Panc1 (cell line): ENCODE measurements at regions of chr12 and their contacts with region 1.

Region 1: GRCh38 chr12:120437754-120438494 is at the start of gene COX6A1:
- DNase-seq: peak; percentile 95
- ATAC-seq: peak; percentile 98
- H3K4me3 ChIP-seq: peak within 1 kb of the TSS; percentile 80 to 84
- H3K27ac ChIP-seq: peak within 1 kb of the TSS; percentile 86
- H3K4me1 ChIP-seq: peaks cover 9% of the 10 kb centered on the region
- H3K27me3 ChIP-seq: no peaks in the 10 kb centered on the region
- CTCF ChIP-seq: 0 out of 2 replicates have a peak, but pooled peaks have one; percentile 20
- total RNA-seq, gene COX6A1: 557 TPM

Region 2: DNA sequence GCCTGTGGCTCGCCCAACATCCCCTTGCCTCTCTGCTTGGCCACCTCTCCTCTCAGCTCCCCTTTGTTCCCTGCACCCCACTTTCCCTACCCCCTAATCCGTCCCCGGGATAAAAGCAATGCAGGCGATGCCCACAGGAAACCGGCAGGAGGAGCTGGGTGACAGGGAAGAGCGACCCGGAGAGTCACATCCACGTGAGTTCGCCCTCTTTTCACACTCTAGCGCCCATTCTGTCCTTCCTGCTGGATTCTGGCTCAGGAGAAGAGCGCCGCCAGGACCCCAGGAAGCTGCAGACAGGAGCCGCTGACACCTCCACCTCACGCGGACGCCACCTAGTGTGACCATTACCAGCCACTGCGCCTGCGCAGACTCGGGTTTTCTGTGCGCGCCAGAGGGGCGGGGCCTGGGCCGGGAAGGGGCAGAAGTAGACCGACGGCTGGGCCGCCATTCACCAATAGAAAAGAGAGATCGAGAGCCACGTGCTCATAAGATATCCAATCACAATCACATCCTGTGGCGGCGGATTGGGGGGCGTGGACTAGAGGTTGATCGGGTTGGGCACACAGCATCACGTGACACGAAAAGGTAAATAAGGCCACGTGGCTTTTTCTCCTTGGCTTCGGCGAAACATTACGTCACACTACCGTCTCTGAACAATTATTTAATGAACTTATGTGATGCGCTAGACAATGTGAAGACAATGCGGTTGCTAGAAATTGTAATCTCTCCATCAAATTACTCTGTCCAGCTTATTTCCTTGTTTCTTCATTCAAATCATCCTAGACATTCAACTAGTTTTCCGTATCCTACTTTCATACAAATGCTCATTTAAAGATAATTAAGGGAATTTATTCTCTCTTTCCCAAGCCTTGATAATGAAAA is 120.5 kb before region 1 on chr12:
- CTCF ChIA-PET with region 1: no interaction called
- POLR2A ChIA-PET with region 1: interaction called, 13 read pairs
- in situ Hi-C with region 1: no loop called
- intact Hi-C with region 1: no loop called
- DNase-seq: peak; percentile 94
- ATAC-seq: peak; percentile 99
- H3K4me3 ChIP-seq: peak overlapping the region; percentile 68 to 77
- H3K27ac ChIP-seq: peak overlapping the region; percentile 91
- H3K4me1 ChIP-seq: peaks cover 4% of the 10 kb centered on the region; the same call in 1 of the 2 replicates
- H3K27me3 ChIP-seq: no peaks in the 10 kb centered on the region
- CTCF ChIP-seq: peak; percentile 82

Region 3: DNA sequence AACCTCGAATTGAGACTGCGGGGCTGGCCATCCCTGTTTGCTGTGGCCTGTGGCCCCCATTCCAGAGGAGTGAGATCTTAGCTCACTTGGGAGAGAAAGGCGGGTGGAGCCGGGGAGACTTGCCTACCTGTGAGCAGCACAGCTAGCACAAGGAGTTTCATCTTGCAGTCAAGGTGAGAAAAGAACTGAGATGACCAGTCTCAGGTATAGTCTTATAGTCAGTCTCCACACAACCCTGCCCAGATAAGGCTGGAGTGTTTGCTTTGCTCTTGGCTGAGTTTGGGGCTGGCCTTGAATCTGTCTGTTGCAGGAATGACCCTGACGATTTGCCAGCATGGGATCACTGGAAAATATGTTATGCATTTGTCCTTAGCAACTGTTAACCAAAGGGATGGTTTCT is 110.3 kb before region 1 on chr12 and contains the start of gene PLA2G1B:
- CTCF ChIA-PET with region 1: interaction called, 4 read pairs
- POLR2A ChIA-PET with region 1: no interaction called
- in situ Hi-C with region 1: no loop called
- intact Hi-C with region 1: loop called (anchors 1 kb)
- DNase-seq: no peak
- ATAC-seq: no peak
- H3K4me3 ChIP-seq: no peak within 1 kb of the TSS
- H3K27ac ChIP-seq: no peak within 1 kb of the TSS
- H3K4me1 ChIP-seq: 0 out of 2 replicates have a peak, but pooled peaks cover 4% of the 10 kb centered on the region
- H3K27me3 ChIP-seq: no peaks in the 10 kb centered on the region
- CTCF ChIP-seq: no peak
- total RNA-seq, gene PLA2G1B: 0.69 TPM

Region 4: GRCh38 chr12:120978296-120979219 is 540.6 kb after region 1 on chr12 and contains the start of gene HNF1A:
- CTCF ChIA-PET with region 1: interaction called, 18 read pairs
- POLR2A ChIA-PET with region 1: no interaction called
- in situ Hi-C with region 1: no loop called
- intact Hi-C with region 1: no loop called
- DNase-seq: no peak
- ATAC-seq: peak; percentile 80
- H3K4me3 ChIP-seq: no peak within 1 kb of the TSS
- H3K27ac ChIP-seq: no peak within 1 kb of the TSS
- H3K4me1 ChIP-seq: peaks cover 14% of the 10 kb centered on the region
- H3K27me3 ChIP-seq: no peaks in the 10 kb centered on the region
- CTCF ChIP-seq: no peak
- total RNA-seq, gene HNF1A: 0.26 TPM